Heart right ventricle (tissue), 16 donors: ENCODE measurements at regions of chr1 and their contacts with region 1.

Region 1: DNA sequence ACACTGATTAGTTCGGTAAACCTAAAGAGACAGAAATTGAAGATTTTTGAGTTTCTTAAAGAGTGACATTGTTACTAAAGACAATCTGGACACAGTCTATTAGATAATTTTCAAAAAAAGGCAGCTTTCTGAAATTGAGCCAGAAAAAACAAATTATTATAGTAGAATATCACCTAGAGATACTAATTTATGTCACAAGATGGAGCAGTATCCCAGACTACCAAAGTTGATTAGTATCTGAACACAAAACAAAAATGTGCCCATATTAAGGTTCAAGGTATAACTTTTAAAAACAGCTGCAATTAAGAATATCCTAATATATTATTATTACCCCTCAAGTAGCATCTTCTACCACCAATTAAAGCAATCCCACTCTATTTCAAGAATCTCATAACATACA is 40.5 kb upstream of the SYT2 start:
- DNase-seq: no peak
- ATAC-seq: no peak
- H3K4me3 ChIP-seq: no peak overlapping the region
- H3K27ac ChIP-seq: no peak overlapping the region
- H3K4me1 ChIP-seq: peaks cover 0 to 5% (median 0%) of the 10 kb centered on the region in 9 donors
- H3K27me3 ChIP-seq: no peaks in the 10 kb centered on the region
- CTCF ChIP-seq: peak in 5 of 9 donors; percentile 11 to 43 (median 27)

Region 2: GRCh38 chr1:202713110-202713509 is 37.6 kb before region 1 on chr1:
- intact Hi-C with region 1: no loop called
- DNase-seq: no peak
- ATAC-seq: no peak
- H3K4me3 ChIP-seq: no peak overlapping the region
- H3K27ac ChIP-seq: no peak overlapping the region
- H3K4me1 ChIP-seq: peaks cover 0 to 19% (median 15%) of the 10 kb centered on the region in 9 donors
- H3K27me3 ChIP-seq: peaks cover 7 to 98% (median 39%) of the 10 kb centered on the region in 7 donors
- CTCF ChIP-seq: no peak

Region 3: GRCh38 chr1:202781180-202781579 is 30.4 kb after region 1 on chr1:
- intact Hi-C with region 1: no loop called
- DNase-seq: no peak
- ATAC-seq: no peak
- H3K4me3 ChIP-seq: no peak overlapping the region
- H3K27ac ChIP-seq: no peak overlapping the region
- H3K4me1 ChIP-seq: peaks cover 0 to 17% (median 10%) of the 10 kb centered on the region in 9 donors
- H3K27me3 ChIP-seq: no peaks in the 10 kb centered on the region
- CTCF ChIP-seq: no peak

Region 4: DNA sequence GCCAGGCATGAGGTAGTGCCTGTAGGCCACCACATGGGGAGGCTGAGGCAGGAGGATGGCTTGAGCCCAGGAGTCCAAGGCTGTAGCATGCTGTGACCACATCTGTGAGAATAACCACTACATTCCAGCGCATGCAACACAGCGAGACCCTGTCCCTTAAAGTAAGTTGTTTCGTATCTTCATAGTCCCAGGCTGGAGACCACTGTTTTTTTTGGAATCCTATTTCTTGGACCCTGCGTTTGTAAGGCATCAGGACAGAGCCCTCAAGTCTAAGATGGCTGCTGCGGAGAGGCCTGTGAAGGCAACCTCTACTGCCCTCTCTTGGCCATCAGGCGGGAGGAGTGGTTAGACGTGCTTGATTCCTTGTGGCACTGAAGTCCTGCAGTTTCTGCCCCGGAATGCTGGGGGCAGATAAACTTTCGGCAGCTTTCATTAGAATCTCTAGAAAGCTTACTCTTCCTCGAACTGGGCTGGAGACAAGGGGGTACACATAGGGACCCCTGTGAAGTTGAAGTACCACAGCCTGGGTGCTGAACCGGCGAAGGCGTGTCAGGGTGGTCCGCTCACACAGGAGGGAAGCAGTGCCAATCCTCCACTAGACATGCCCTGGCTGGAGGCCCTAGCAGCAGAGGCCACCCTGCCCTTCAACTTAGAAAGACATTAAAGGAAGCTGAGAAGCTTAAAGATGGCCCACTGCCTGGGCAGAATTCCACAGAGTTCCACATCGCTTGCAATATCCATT is 101.6 kb after region 1 on chr1:
- intact Hi-C with region 1: loop called in 1 of 10 experiments (anchors 1 kb)
- DNase-seq: no peak
- ATAC-seq: peak in 1 of 8 donors; percentile 65
- H3K4me3 ChIP-seq: no peak overlapping the region
- H3K27ac ChIP-seq: no peak overlapping the region
- H3K4me1 ChIP-seq: no peaks in the 10 kb centered on the region
- H3K27me3 ChIP-seq: no peaks in the 10 kb centered on the region
- CTCF ChIP-seq: peak in 6 of 9 donors; percentile 25 to 52 (median 42)

Region 5: GRCh38 chr1:202888531-202889360 is 138.0 kb after region 1 on chr1 and contains the start of gene RABIF:
- intact Hi-C with region 1: loop called in 1 of 10 experiments (anchors 10 kb)
- DNase-seq: peak; percentile 96 to 97
- ATAC-seq: peak; percentile 98 to 99 (median 99)
- H3K4me3 ChIP-seq: peak within 1 kb of the TSS; percentile 59 to 88 (median 74)
- H3K27ac ChIP-seq: peak within 1 kb of the TSS; percentile 70 to 98 (median 95)
- H3K4me1 ChIP-seq: peaks cover 0 to 18% (median 13%) of the 10 kb centered on the region in 9 donors
- H3K27me3 ChIP-seq: no peaks in the 10 kb centered on the region
- CTCF ChIP-seq: peak in 6 of 9 donors; percentile 10 to 59 (median 37)
- total RNA-seq, gene RABIF: 3.2 to 6.0 (median 4.8) TPM

Region 6: GRCh38 chr1:202998836-202999750 is 248.3 kb after region 1 on chr1:
- intact Hi-C with region 1: loop called in 4 of 10 experiments (anchors 10 kb)
- DNase-seq: peak in 1 of 2 donors; percentile 44
- ATAC-seq: peak in 2 of 8 donors; percentile 10 to 22
- H3K4me3 ChIP-seq: no peak overlapping the region
- H3K27ac ChIP-seq: no peak overlapping the region
- H3K4me1 ChIP-seq: peaks cover 0 to 6% (median 0%) of the 10 kb centered on the region in 9 donors
- H3K27me3 ChIP-seq: peaks cover 0 to 23% (median 16%) of the 10 kb centered on the region in 7 donors
- CTCF ChIP-seq: peak; percentile 70 to 87 (median 81)